MCF 10A (cell line): ENCODE measurements at regions of chr14 and their contacts with region 1.

Region 1: GRCh38 chr14:73238424-73238852 is 1.1 kb downstream of the PAPLN start:
- DNase-seq: peak; percentile 85
- H3K4me3 Mint-ChIP-seq: peak overlapping the region; percentile 70
- H3K27ac Mint-ChIP-seq: peak overlapping the region; percentile 19
- H3K4me1 Mint-ChIP-seq: peaks cover 44% of the 10 kb centered on the region
- H3K27me3 Mint-ChIP-seq: peaks cover 41% of the 10 kb centered on the region
- CTCF ChIP-seq: no peak

Region 2: DNA sequence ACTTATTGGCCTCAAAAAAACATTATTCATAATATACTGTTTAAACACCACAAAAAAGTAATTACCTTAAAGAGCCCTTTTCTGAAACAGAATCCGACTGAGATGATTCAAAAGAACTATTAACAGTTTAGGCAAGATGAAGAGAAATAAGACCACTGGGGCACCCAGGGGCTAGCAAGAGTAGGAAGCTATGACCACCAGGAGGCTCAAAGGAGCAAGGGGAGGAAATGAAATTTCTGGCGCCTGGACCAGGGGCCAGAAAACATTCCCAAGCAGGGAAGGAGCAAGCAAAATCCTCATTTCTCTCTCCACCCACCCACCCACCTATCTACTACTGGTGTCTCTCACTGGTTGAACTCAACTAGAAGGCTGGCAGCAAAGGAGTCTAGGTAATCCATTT is 318.4 kb before region 1 on chr14:
- CTCF ChIA-PET with region 1: no interaction called
- POLR2A ChIA-PET with region 1: no interaction called
- intact Hi-C with region 1: no loop called
- DNase-seq: no peak
- H3K4me3 Mint-ChIP-seq: no peak overlapping the region
- H3K27ac Mint-ChIP-seq: no peak overlapping the region
- H3K4me1 Mint-ChIP-seq: no peaks in the 10 kb centered on the region
- H3K27me3 Mint-ChIP-seq: no peaks in the 10 kb centered on the region
- CTCF ChIP-seq: no peak

Region 3: DNA sequence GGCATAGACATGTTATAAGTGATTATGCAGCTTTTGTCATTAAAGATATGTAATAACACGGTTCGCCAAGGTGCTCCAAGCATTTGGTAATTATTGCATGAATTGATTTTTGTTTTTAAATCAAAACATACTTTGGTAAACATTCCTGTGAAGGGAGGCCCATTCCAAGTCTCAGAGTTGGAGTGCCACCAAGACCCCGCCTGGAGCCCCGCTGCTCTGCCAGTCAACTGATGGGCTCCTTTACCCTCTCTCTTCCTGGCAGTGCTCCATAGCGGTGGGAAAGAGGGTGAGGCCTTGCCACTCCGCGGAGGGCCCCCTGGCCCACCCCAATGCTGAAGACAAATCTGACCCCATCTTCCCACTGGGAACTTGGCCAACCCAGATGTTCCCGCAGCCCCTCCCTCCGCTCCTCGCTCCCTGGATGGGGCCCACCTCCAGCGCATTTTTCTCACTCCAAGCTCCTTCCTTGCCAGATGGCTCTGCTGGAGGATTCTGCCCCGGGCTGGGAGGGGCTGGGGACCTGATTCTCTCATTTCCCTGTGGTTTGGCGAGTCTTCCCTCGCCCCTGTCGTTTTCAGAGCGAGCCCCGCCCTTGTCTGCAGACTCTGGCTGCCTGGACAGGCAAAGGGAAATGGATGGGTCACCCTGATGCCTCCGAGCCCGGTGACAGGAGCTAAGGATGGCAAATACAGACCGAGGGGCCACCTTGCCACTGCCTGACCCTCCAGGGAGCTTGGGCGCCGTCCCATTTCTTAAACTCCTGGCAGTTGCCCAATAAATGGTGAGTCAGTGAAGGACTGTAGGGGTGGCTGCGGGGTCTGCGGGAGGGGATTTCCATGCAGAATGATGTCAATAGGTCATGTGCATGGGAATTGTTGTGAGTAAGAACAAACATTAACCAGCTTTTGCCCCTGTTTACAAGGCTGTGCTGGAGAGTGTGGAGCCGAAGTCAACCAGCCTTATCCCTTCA is 10.3 kb before region 1 on chr14:
- CTCF ChIA-PET with region 1: interaction called, 3 read pairs
- POLR2A ChIA-PET with region 1: interaction called, 4 read pairs
- intact Hi-C with region 1: loop called (anchors 1 kb)
- DNase-seq: peak; percentile 86
- H3K4me3 Mint-ChIP-seq: peak overlapping the region; percentile 40
- H3K27ac Mint-ChIP-seq: peak overlapping the region; percentile 94
- H3K4me1 Mint-ChIP-seq: peaks cover 18% of the 10 kb centered on the region
- H3K27me3 Mint-ChIP-seq: peaks cover 11% of the 10 kb centered on the region
- CTCF ChIP-seq: no peak